Breast epithelium (tissue), 4 donors: ENCODE measurements at regions of chr21 and their contacts with region 1.

Region 1: GRCh38 chr21:28540514-28540913 is 452.2 kb downstream of the LTN1 start:
- DNase-seq: no peak
- H3K4me3 ChIP-seq: no peak overlapping the region
- H3K27ac ChIP-seq: no peak overlapping the region
- H3K4me1 ChIP-seq: no peaks in the 10 kb centered on the region
- H3K27me3 ChIP-seq: no peaks in the 10 kb centered on the region
- CTCF ChIP-seq: no peak
- POLR2A ChIP-seq: no peak

Region 2: GRCh38 chr21:28714777-28715464 is 174.4 kb after region 1 on chr21:
- intact Hi-C with region 1: loop called (anchors 10 kb)
- DNase-seq: no peak
- H3K4me3 ChIP-seq: no peak overlapping the region
- H3K27ac ChIP-seq: no peak overlapping the region
- H3K4me1 ChIP-seq: no peaks in the 10 kb centered on the region
- H3K27me3 ChIP-seq: no peaks in the 10 kb centered on the region
- CTCF ChIP-seq: no peak
- POLR2A ChIP-seq: no peak